Natural killer cell (primary cell): ENCODE measurements at regions of chr2 and their contacts with region 1.

Region 1: DNA sequence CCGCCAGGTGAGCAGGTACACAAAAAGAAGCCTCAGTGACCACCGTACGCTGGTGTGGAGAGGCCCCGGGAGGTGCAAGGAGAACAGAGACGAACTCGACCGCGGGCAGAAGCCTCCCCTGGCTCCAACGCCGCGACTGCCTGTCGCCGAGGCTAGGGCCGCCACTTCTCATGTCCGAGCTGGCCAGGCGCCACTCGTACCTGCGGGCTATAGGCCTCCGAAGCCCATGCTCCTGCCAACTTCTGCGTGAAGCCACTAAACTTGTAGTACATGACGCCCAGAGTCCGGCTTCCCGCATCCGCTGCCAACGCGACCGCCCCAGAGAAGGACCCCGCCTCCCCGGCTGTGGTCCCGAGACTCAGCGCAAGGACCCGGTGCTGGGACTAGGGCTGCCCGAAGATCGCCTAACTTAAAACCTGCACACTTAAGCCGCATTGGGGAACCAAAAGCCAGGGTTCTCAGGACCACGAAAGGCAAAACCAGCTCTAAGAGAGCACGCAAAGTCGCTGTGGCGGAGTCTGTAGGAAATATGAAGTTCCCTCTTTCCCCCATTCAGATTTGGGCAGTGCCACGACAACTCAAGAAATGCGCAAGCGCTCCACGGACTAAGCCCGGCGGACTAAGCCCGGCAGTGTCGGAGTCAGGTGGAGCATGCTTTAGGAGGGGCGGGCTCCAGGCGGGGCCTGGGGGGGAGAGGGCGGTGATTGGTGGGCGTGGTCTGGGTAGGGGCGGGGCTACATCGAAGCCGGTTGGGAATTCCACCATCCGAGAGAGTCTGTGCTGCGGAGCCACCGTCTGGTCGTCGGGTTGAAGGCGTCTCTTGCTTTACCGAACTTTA is at the start of gene COX7A2L:
- DNase-seq: peak; percentile 91 to 98
- ATAC-seq: peak; percentile 91 to 98 (median 91)
- H3K4me3 ChIP-seq: peak within 1 kb of the TSS; percentile 78
- H3K4me3 Mint-ChIP-seq: peak within 1 kb of the TSS; percentile 91
- H3K27ac ChIP-seq: peak within 1 kb of the TSS; percentile 90
- H3K27ac Mint-ChIP-seq: peak within 1 kb of the TSS; percentile 92 to 94
- H3K4me1 ChIP-seq: peaks cover 23% of the 10 kb centered on the region
- H3K4me1 Mint-ChIP-seq: peaks cover 52 to 57% of the 10 kb centered on the region in 2 donors
- H3K27me3 ChIP-seq: no peaks in the 10 kb centered on the region
- H3K27me3 Mint-ChIP-seq: no peaks in the 10 kb centered on the region
- CTCF ChIP-seq: no peak
- total RNA-seq, gene COX7A2L: 45.8 to 59.1 (median 58.1) TPM

Region 2: DNA sequence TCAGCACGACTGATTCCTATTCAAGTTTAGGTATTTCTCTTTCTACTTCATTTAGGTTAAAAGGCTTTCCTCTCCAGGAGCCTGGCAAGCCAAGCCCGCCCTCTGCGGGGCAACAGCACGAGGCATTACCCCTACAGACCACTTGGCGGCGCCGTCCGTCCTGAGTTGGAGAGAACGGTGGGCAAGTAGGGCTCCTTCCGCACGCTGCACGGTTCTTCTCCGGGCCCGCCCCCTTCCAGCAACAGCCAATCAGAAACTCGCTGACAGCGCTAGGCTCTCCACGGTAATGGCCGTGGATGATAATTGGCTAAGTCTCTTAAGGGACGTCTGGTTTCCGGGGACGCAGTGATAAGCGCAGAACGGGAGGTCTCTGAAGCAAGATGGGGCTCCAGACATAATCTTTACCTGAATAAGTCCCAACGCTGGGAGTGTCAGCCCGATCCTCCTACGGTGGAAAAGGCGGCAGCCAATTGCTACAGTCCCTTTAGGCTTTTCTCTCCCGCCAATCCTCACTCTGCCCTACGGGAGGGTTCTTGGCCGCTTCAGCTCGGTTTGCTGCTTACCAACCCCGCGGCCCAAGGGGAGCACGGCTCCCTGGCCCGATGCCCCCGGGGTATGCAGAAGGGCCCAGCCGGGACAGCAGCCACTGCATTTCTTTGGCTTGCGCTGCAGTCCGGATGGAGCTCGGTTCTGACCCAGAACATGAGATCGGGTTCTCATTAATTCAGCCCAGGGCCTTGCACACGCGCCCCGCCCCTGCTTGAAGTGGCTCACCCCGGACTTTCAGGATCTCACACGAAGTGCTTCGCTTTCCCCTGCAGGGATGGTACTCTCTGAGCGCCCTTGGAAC is 520.2 kb before region 1 on chr2:
- intact Hi-C with region 1: loop called (anchors 1 kb)
- DNase-seq: peak; percentile 92 to 98
- ATAC-seq: peak; percentile 98 to 100 (median 98)
- H3K4me3 ChIP-seq: peak overlapping the region; percentile 83
- H3K4me3 Mint-ChIP-seq: peak overlapping the region; percentile 98
- H3K27ac ChIP-seq: peak overlapping the region; percentile 77
- H3K27ac Mint-ChIP-seq: peak overlapping the region; percentile 83 to 93
- H3K4me1 ChIP-seq: peaks cover 11% of the 10 kb centered on the region
- H3K4me1 Mint-ChIP-seq: peaks cover 15 to 16% of the 10 kb centered on the region in 2 donors
- H3K27me3 ChIP-seq: peaks cover 10% of the 10 kb centered on the region
- H3K27me3 Mint-ChIP-seq: peaks cover 28 to 38% of the 10 kb centered on the region in 2 donors
- CTCF ChIP-seq: peak; percentile 94

Region 3: GRCh38 chr2:42102024-42102590 is 259.0 kb before region 1 on chr2:
- intact Hi-C with region 1: loop called (anchors 1 kb)
- DNase-seq: peak; percentile 94 to 98
- ATAC-seq: peak; percentile 80 to 92 (median 86)
- H3K4me3 ChIP-seq: peak overlapping the region; percentile 41
- H3K4me3 Mint-ChIP-seq: peak overlapping the region; percentile 87
- H3K27ac ChIP-seq: peak overlapping the region; percentile 99
- H3K27ac Mint-ChIP-seq: peak overlapping the region in 1 of 2 donors; percentile 99
- H3K4me1 ChIP-seq: peaks cover 93% of the 10 kb centered on the region
- H3K4me1 Mint-ChIP-seq: peaks cover 28 to 49% of the 10 kb centered on the region in 2 donors
- H3K27me3 ChIP-seq: no peaks in the 10 kb centered on the region
- H3K27me3 Mint-ChIP-seq: no peaks in the 10 kb centered on the region
- CTCF ChIP-seq: no peak

Region 4: GRCh38 chr2:42169100-42169873 is 191.8 kb before region 1 on chr2 and contains the start of gene EML4:
- intact Hi-C with region 1: loop called (anchors 2 kb)
- DNase-seq: peak; percentile 94 to 96
- ATAC-seq: peak; percentile 92 to 98 (median 94)
- H3K4me3 ChIP-seq: peak within 1 kb of the TSS; percentile 96
- H3K4me3 Mint-ChIP-seq: peak within 1 kb of the TSS; percentile 45
- H3K27ac ChIP-seq: peak within 1 kb of the TSS; percentile 94
- H3K27ac Mint-ChIP-seq: no peak within 1 kb of the TSS
- H3K4me1 ChIP-seq: peaks cover 19% of the 10 kb centered on the region
- H3K4me1 Mint-ChIP-seq: peaks cover 0 to 7% of the 10 kb centered on the region in 2 donors
- H3K27me3 ChIP-seq: no peaks in the 10 kb centered on the region
- H3K27me3 Mint-ChIP-seq: peaks cover 3 to 4% of the 10 kb centered on the region in 2 donors
- CTCF ChIP-seq: no peak
- total RNA-seq, gene EML4: 88.4 to 136 (median 91.5) TPM

Region 5: DNA sequence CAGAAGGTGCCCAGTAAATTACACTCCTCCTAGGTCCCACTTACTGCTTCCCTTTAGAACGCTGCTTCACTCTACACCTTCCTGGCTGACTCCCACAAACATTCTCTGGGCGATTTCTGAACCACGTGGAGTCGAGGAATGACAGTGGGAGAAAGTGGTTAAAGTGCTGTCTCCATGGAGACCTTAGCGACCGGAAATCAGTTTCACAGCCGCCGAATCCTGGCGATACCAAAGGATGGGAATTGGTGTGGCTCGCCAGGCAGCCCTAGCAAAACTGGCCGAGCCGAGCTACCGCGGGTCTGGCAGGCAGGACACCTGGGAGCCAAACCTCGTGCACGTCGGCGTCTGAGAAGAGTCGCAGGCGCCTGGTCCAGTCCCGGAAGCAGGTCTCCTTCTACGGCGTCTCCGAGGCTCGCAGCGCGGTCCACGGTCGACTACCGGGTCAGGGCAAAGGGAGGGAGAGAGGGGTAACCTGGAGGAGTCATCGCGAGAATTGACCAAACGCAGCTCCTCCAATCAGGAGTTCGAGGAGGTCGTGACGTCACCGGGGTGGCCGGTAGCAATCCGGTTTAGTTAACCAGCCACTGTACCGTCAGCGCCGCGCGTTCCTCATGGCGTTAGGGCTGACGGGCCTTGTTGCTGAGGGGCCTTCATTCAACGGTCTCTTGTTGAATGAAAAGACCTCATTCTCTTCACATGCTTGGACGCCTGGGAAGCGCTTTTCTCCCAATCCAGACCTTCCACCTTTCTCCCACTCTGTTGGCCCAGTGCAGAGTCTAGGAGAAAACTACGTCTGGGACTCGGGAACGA is 1234.7 kb after region 1 on chr2 and contains the start of gene THADA:
- intact Hi-C with region 1: loop called (anchors 5 kb)
- DNase-seq: peak; percentile 96 to 98
- ATAC-seq: peak; percentile 97 to 99 (median 97)
- H3K4me3 ChIP-seq: peak within 1 kb of the TSS; percentile 94
- H3K4me3 Mint-ChIP-seq: peak within 1 kb of the TSS; percentile 88
- H3K27ac ChIP-seq: peak within 1 kb of the TSS; percentile 85
- H3K27ac Mint-ChIP-seq: peak within 1 kb of the TSS; percentile 94 to 97
- H3K4me1 ChIP-seq: peaks cover 15% of the 10 kb centered on the region
- H3K4me1 Mint-ChIP-seq: peaks cover 23 to 24% of the 10 kb centered on the region in 2 donors
- H3K27me3 ChIP-seq: no peaks in the 10 kb centered on the region
- H3K27me3 Mint-ChIP-seq: peaks cover 23% of the 10 kb centered on the region in 2 donors
- CTCF ChIP-seq: no peak
- total RNA-seq, gene THADA: 34.1 to 35.7 (median 35.3) TPM